SK-N-SH (cell line): ENCODE measurements at regions of chr7 and their contacts with region 1.

Region 1: GRCh38 chr7:148262721-148263229 is 327.8 kb upstream of the C7orf33 start:
- DNase-seq: peak; percentile 84
- H3K4me3 ChIP-seq: peak overlapping the region; percentile 29 to 51
- H3K27ac ChIP-seq: no peak overlapping the region; a peak in 1 of 4 replicates
- H3K4me1 ChIP-seq: peaks cover 0 to 15% of the 10 kb centered on the region in 2 experiments; a peak in 2 of 4 replicates
- H3K27me3 ChIP-seq: no peaks in the 10 kb centered on the region
- CTCF ChIP-seq: peak; percentile 99
- EP300 ChIP-seq: no peak
- RAD21 ChIP-seq: peak; percentile 97

Region 2: DNA sequence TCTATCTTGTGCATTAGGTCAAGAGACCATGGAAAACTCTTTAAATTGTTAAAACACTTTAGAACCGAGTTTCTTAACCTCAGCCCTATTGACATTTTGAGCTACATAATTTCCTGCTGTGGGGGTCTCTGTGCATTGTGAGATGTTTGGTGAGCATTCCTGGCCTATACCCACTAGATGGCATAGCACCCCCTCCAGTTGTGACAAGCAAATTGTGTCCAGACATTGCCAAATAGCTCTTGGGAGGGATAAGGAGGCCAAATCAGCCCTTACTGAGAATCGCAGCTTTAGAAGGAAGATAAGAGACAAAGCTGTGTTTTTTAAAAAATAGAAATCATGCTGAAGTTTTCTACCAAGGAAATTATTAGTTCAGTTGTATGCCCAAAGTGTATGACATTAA is 830.7 kb before region 1 on chr7:
- CTCF ChIA-PET with region 1: interaction called, 11 read pairs
- POLR2A ChIA-PET with region 1: no interaction called
- DNase-seq: peak; percentile 61
- H3K4me3 ChIP-seq: no peak overlapping the region
- H3K27ac ChIP-seq: peak overlapping the region; percentile 20 to 23; a peak in 3 of 4 replicates
- H3K4me1 ChIP-seq: peaks cover 8 to 9% of the 10 kb centered on the region in 2 experiments; a peak in 3 of 4 replicates
- H3K27me3 ChIP-seq: no peaks in the 10 kb centered on the region
- CTCF ChIP-seq: peak; percentile 85
- EP300 ChIP-seq: 0 out of 4 replicates have a peak, but pooled peaks of 1 of the 2 experiments have one; percentile 11
- RAD21 ChIP-seq: peak; percentile 98

Region 3: GRCh38 chr7:148276314-148277041 is 13.7 kb after region 1 on chr7:
- CTCF ChIA-PET with region 1: interaction called, 61 read pairs
- POLR2A ChIA-PET with region 1: no interaction called
- DNase-seq: no peak
- H3K4me3 ChIP-seq: no peak overlapping the region
- H3K27ac ChIP-seq: no peak overlapping the region
- H3K4me1 ChIP-seq: peaks cover 0 to 8% of the 10 kb centered on the region in 2 experiments; a peak in 1 of 4 replicates
- H3K27me3 ChIP-seq: no peaks in the 10 kb centered on the region
- CTCF ChIP-seq: no peak
- EP300 ChIP-seq: no peak
- RAD21 ChIP-seq: no peak

Region 4: GRCh38 chr7:148480479-148481146 is 217.8 kb after region 1 on chr7:
- CTCF ChIA-PET with region 1: interaction called, 21 read pairs
- POLR2A ChIA-PET with region 1: no interaction called
- DNase-seq: no peak
- H3K4me3 ChIP-seq: no peak overlapping the region
- H3K27ac ChIP-seq: no peak overlapping the region
- H3K4me1 ChIP-seq: peaks cover 0 to 10% of the 10 kb centered on the region in 2 experiments; a peak in 2 of 4 replicates
- H3K27me3 ChIP-seq: no peaks in the 10 kb centered on the region
- CTCF ChIP-seq: no peak
- EP300 ChIP-seq: no peak
- RAD21 ChIP-seq: peak; percentile 35

Region 5: GRCh38 chr7:148492157-148492860 is 229.5 kb after region 1 on chr7:
- CTCF ChIA-PET with region 1: interaction called, 13 read pairs
- POLR2A ChIA-PET with region 1: no interaction called
- DNase-seq: no peak
- H3K4me3 ChIP-seq: no peak overlapping the region
- H3K27ac ChIP-seq: no peak overlapping the region
- H3K4me1 ChIP-seq: no peaks in the 10 kb centered on the region
- H3K27me3 ChIP-seq: no peaks in the 10 kb centered on the region
- CTCF ChIP-seq: no peak
- EP300 ChIP-seq: no peak
- RAD21 ChIP-seq: no peak

Region 6: DNA sequence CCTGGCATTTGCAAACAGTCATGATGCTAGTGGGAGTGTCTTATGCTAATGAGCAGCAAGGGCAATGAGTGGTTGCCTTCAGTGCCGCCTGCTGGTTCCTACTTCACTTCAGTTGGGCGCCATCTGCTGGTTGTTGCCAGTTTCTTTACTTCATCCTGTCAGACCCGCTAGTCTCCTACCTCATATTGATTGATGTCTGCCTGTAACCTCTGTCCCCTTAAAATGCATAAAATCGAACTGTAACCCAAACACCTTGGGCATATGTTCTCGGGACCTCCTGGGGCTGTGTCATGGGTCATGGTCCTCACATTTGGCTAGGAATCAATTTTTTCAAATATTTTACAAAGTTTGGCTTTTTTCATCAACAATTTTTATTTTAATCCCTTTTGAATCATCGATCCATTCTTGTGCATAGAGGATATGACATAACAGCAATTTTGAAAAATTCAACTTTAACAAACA is 265.0 kb after region 1 on chr7:
- CTCF ChIA-PET with region 1: interaction called, 32 read pairs
- POLR2A ChIA-PET with region 1: no interaction called
- DNase-seq: peak; percentile 81
- H3K4me3 ChIP-seq: peak overlapping the region in 1 of 2 experiments; percentile 15; a peak in 1 of 4 replicates
- H3K27ac ChIP-seq: no peak overlapping the region
- H3K4me1 ChIP-seq: no peaks in the 10 kb centered on the region; a peak in 1 of 4 replicates
- H3K27me3 ChIP-seq: no peaks in the 10 kb centered on the region; the same call in 1 of the 2 replicates
- CTCF ChIP-seq: peak; percentile 99
- EP300 ChIP-seq: no peak
- RAD21 ChIP-seq: peak; percentile 85

Region 7: GRCh38 chr7:148773334-148773733 is 510.6 kb after region 1 on chr7:
- CTCF ChIA-PET with region 1: no interaction called
- POLR2A ChIA-PET with region 1: no interaction called
- DNase-seq: no peak
- H3K4me3 ChIP-seq: no peak overlapping the region
- H3K27ac ChIP-seq: peak overlapping the region; percentile 58 to 84; a peak in 3 of 4 replicates
- H3K4me1 ChIP-seq: peaks cover 5 to 34% of the 10 kb centered on the region in 2 experiments; a peak in 3 of 4 replicates
- H3K27me3 ChIP-seq: no peaks in the 10 kb centered on the region
- CTCF ChIP-seq: no peak
- EP300 ChIP-seq: no peak
- RAD21 ChIP-seq: no peak